Endothelial cell of umbilical vein (primary cell): ENCODE measurements at regions of chr3 and their contacts with region 1.

Region 1: DNA sequence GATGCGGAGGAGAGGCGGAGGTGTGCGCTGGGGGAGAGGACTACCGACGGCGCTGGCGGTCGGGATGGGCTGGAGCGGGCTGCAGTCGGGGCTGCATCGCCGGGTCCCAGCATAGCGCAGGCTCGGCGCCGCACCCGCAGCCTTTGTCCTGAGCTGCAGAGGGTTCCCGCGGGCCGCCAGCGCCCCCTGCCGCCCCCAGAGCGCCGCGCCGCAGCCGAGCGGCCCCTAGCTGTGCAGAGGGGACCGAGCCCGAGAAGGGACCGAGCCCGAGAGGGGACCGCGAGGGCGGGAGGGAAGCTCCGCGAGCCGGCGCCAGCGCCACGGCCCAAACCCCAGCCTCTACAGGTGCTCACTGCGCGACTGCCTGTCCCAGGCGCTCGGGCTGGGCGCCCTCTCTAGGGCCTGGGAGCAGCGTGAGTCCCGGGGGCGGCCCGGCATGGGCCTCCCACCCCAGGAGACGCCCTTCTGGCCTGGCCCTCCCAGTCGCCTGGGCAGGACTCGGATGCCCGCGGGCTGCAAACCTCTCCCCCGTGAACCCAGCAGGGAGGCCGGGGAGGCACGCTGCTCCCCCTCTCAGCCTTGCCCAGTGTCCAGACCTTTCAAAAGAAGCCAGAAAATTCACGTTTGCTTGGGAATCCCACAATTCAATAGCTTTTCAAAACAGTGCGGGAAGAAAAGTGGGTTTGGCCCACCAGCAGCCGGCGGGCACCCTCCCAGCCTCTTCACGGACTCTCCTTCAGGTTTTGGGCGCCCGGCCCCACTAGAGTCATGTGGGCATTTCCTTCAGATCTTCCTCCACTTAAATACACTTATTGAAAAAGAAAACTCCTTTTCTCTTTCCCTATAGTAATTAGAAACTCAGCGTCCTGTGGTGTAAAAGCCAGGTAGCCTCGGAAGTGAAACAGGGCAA is 134.7 kb downstream of the TPRA1 start:
- DNase-seq: peak; percentile 54
- H3K4me3 ChIP-seq: no peak overlapping the region
- H3K27ac ChIP-seq: no peak overlapping the region
- H3K4me1 ChIP-seq: peaks cover 13% of the 10 kb centered on the region
- H3K27me3 ChIP-seq: peaks cover 18 to 34% of the 10 kb centered on the region in 2 experiments
- CTCF ChIP-seq: peak; percentile 84 to 94
- POLR2A ChIP-seq: no peak

Region 2: DNA sequence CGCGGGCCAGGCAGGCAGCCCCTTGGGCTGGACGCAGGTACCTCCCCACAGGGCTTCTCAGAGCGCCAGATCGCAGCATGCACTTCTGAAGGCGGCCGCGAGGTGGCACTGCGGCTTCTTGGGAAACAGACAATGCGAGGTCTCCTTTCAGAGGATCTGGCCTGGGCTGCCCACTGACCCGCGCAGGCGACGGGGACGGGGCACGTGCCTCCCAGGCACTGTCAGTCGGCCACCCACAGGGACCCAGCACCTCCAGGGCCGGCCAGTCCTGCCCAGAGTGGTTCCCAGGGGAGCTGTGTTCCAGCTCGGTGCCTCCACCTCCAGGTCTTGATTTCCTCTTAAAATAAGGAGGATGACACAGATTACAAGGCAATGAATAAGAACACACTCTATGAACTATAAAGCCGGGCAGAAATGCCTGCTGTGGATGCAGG is 776.5 kb before region 1 on chr3:
- CTCF ChIA-PET with region 1: interaction called, 92 read pairs
- POLR2A ChIA-PET with region 1: no interaction called
- dilution Hi-C with region 1: no loop called
- intact Hi-C with region 1: loop called (anchors 1 kb)
- DNase-seq: peak; percentile 76
- H3K4me3 ChIP-seq: no peak overlapping the region
- H3K27ac ChIP-seq: no peak overlapping the region
- H3K4me1 ChIP-seq: no peaks in the 10 kb centered on the region
- H3K27me3 ChIP-seq: peaks cover 6 to 26% of the 10 kb centered on the region in 2 experiments
- CTCF ChIP-seq: peak; percentile 91 to 97
- POLR2A ChIP-seq: no peak

Region 3: DNA sequence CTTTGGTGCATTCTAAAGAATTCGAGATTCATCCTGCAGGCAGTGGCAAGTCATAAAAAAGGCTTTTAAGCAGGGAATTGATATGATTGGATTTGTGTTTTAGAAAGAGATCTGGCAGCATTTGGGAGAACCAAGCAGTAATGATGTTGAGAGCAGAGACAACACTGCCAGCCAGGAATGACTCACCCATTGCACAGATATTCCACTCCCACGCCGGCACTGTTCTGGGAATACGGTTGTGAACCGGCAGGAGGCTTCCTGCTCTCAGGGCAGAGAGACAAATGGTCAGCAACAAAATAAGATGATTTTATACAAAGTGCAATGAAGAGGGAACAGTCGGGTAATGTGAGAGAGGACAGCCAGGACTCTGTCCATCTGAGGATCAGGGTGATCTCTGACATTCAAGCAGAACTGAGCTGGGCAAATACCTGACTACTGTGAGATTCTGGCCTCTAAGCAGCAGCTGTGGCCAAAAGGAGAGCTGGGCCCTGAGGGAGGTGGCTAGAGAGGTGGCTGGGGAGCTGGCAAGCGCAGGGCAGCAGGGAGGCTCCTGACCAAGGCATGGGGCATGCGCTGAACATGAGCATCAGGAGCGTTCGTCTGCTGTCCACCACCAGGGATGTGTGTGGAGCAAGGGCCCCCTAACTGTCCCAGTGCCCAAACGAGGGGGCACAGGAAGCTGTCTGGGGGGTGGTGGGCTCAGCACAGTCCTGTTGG is 529.0 kb before region 1 on chr3:
- CTCF ChIA-PET with region 1: no interaction called
- POLR2A ChIA-PET with region 1: no interaction called
- dilution Hi-C with region 1: no loop called
- intact Hi-C with region 1: loop called (anchors 5 kb)
- DNase-seq: peak; percentile 88
- H3K4me3 ChIP-seq: no peak overlapping the region
- H3K27ac ChIP-seq: peak overlapping the region; percentile 40
- H3K4me1 ChIP-seq: peaks cover 44% of the 10 kb centered on the region
- H3K27me3 ChIP-seq: peaks cover 3 to 29% of the 10 kb centered on the region in 2 experiments
- CTCF ChIP-seq: peak; percentile 16 to 30
- POLR2A ChIP-seq: no peak

Region 4: GRCh38 chr3:127002195-127003174 is 453.3 kb before region 1 on chr3:
- CTCF ChIA-PET with region 1: no interaction called
- POLR2A ChIA-PET with region 1: no interaction called
- dilution Hi-C with region 1: no loop called
- intact Hi-C with region 1: loop called (anchors 5 kb)
- DNase-seq: peak; percentile 83
- H3K4me3 ChIP-seq: no peak overlapping the region
- H3K27ac ChIP-seq: peak overlapping the region; percentile 50
- H3K4me1 ChIP-seq: peaks cover 11% of the 10 kb centered on the region
- H3K27me3 ChIP-seq: no peaks in the 10 kb centered on the region
- CTCF ChIP-seq: peak; percentile 74 to 82
- POLR2A ChIP-seq: peak; percentile 32

Region 5: GRCh38 chr3:127374086-127375010 is 81.4 kb before region 1 on chr3:
- CTCF ChIA-PET with region 1: interaction called, 15 read pairs
- POLR2A ChIA-PET with region 1: no interaction called
- dilution Hi-C with region 1: no loop called
- intact Hi-C with region 1: loop called (anchors 1 kb)
- DNase-seq: no peak
- H3K4me3 ChIP-seq: no peak overlapping the region
- H3K27ac ChIP-seq: no peak overlapping the region
- H3K4me1 ChIP-seq: no peaks in the 10 kb centered on the region
- H3K27me3 ChIP-seq: no peaks in the 10 kb centered on the region
- CTCF ChIP-seq: peak; percentile 29 to 48
- POLR2A ChIP-seq: no peak